Spleen (tissue), 13 donors: ENCODE measurements at regions of chr14 and their contacts with region 1.

Region 1: GRCh38 chr14:64303471-64303917 is 9.3 kb upstream of the ESR2 start:
- DNase-seq: no peak
- H3K4me3 ChIP-seq: no peak overlapping the region
- H3K27ac ChIP-seq: no peak overlapping the region
- H3K4me1 ChIP-seq: no peaks in the 10 kb centered on the region
- H3K27me3 ChIP-seq: no peaks in the 10 kb centered on the region
- CTCF ChIP-seq: peak; percentile 43 to 75 (median 66)
- POLR2A ChIP-seq: no peak

Region 2: GRCh38 chr14:63795532-63795931 is 508.0 kb before region 1 on chr14:
- intact Hi-C with region 1: loop called (anchors 5 kb)
- DNase-seq: no peak
- H3K4me3 ChIP-seq: no peak overlapping the region
- H3K27ac ChIP-seq: no peak overlapping the region
- H3K4me1 ChIP-seq: peaks cover 0 to 12% (median 7%) of the 10 kb centered on the region in 6 donors
- H3K27me3 ChIP-seq: no peaks in the 10 kb centered on the region
- CTCF ChIP-seq: no peak
- POLR2A ChIP-seq: no peak

Region 3: GRCh38 chr14:64688811-64689281 is 385.4 kb after region 1 on chr14:
- intact Hi-C with region 1: no loop called
- DNase-seq: no peak
- H3K4me3 ChIP-seq: no peak overlapping the region
- H3K27ac ChIP-seq: peak overlapping the region in 1 of 8 donors; percentile 13
- H3K4me1 ChIP-seq: peaks cover 8 to 43% (median 31%) of the 10 kb centered on the region in 6 donors
- H3K27me3 ChIP-seq: no peaks in the 10 kb centered on the region
- CTCF ChIP-seq: no peak
- POLR2A ChIP-seq: no peak